ENCODE measurements at regions of chr1 and their contacts with region 1.

Region 1: GRCh38 chr1:115753830-115754229 is 14.7 kb downstream of the CASQ2 start:
- DNase-seq: peak; percentile 33 to 74
- ATAC-seq: peak; percentile 85 to 94 (median 88)
- H3K4me3 ChIP-seq: peak overlapping the region; percentile 16
- H3K27ac ChIP-seq: peak overlapping the region; percentile 90
- H3K4me1 ChIP-seq: peaks cover 65% of the 10 kb centered on the region
- H3K27me3 ChIP-seq: no peaks in the 10 kb centered on the region
- CTCF ChIP-seq: no peak

Region 2: DNA sequence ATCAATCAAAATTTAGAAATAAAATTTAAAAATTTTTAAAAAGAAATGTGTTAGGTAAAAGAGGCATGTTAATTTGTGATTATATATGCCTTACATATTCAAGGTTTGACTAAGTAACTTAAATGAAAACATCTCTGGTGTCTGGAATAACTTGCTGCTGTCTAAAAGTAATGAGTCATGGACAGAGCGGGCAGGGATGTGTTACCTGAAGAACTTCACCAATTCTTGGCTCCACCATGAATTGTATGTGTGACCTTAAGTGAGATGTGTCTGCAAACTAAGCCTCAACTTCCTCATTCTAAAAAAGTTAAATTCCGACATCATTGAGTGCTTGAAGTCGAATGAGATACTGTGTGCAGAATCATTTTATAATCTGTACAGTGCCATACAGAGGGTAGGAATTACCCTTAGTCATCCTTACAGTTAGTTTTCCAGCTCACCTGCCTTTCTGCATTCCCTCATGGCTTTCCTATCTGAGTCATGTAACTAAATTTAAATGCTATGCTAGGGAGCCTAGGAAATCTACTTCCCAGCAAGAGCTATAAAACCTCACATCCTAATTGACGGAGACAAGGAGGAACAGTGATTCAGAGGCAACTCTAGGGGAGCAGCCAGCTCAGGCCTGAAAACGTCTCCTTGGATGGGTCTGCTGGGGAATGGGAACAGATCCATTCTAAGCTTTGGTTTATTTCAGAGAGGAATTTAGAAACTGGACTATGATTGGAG is 563.9 kb before region 1 on chr1:
- intact Hi-C with region 1: loop called in 1 of 2 experiments (anchors 5 kb)
- DNase-seq: no peak
- ATAC-seq: peak; percentile 88 to 90 (median 88)
- H3K4me3 ChIP-seq: no peak overlapping the region
- H3K27ac ChIP-seq: peak overlapping the region; percentile 70
- H3K4me1 ChIP-seq: peaks cover 40% of the 10 kb centered on the region
- H3K27me3 ChIP-seq: no peaks in the 10 kb centered on the region
- CTCF ChIP-seq: no peak

Region 3: DNA sequence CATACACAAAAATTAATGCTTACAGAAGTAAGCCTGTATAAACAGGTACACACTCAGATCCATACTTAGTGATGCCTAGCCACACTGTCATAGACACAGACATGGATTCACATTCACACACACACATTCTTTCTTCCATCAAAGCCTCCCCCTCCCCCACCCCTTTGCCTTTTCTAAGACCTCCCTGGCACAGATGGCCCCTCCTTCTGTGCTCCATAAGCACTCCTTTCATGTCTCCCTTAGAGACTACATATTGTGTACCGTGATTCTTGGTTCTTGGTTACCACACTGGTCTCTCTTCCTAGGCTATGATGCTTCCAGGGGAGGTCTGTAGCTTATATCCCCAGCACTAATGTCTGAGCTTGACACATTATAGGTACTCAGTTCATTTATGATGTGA is 89.1 kb after region 1 on chr1:
- intact Hi-C with region 1: no loop called
- DNase-seq: no peak
- ATAC-seq: no peak
- H3K4me3 ChIP-seq: no peak overlapping the region
- H3K27ac ChIP-seq: no peak overlapping the region
- H3K4me1 ChIP-seq: peaks cover 11% of the 10 kb centered on the region
- H3K27me3 ChIP-seq: peaks cover 2 to 87% (median 24%) of the 10 kb centered on the region in 3 donors
- CTCF ChIP-seq: no peak